Left ventricle myocardium inferior (tissue), 1 donor: ENCODE measurements at regions of chr2 and their contacts with region 1.

Region 1: DNA sequence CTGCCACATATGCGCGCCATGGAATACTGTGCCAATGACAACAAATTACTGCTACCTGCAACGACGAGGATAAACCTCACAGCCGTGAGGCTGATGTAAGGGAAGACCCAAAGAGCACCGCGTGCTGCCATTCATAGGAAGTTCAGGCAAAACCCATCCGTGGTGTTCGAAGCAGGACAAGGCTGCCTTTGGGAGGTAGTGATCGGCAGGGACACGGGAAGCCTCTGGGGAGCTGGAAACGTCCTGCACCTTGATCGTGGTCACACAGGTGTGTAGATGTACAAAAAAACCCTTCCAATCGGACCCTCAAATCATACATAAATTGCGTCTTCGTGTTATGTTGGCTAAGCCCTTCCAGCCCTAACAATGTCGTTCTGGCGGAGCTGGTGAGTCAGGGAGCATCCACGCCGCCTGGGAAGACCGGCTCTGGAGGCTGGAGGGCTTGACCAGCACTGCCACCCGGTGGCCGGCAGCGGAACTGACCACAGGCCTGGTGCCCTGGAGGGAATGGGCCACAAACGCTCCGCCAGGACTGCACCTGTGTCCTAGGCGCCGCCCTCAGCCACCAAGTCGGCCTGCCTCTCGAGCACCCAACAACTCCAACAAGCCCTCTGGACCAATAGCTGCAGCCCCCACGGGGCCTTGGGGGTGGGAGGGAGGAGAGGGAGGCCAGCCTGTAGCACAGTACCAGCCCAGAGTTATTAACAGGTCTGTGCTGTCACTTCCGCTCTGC is 4.1 kb upstream of the NEURL3 start:
- DNase-seq: peak; percentile 88
- H3K4me3 ChIP-seq: no peak overlapping the region
- H3K27ac ChIP-seq: no peak overlapping the region
- H3K4me1 ChIP-seq: peaks cover 19% of the 10 kb centered on the region
- H3K27me3 ChIP-seq: peaks cover 4% of the 10 kb centered on the region
- CTCF ChIP-seq: peak; percentile 99

Region 2: DNA sequence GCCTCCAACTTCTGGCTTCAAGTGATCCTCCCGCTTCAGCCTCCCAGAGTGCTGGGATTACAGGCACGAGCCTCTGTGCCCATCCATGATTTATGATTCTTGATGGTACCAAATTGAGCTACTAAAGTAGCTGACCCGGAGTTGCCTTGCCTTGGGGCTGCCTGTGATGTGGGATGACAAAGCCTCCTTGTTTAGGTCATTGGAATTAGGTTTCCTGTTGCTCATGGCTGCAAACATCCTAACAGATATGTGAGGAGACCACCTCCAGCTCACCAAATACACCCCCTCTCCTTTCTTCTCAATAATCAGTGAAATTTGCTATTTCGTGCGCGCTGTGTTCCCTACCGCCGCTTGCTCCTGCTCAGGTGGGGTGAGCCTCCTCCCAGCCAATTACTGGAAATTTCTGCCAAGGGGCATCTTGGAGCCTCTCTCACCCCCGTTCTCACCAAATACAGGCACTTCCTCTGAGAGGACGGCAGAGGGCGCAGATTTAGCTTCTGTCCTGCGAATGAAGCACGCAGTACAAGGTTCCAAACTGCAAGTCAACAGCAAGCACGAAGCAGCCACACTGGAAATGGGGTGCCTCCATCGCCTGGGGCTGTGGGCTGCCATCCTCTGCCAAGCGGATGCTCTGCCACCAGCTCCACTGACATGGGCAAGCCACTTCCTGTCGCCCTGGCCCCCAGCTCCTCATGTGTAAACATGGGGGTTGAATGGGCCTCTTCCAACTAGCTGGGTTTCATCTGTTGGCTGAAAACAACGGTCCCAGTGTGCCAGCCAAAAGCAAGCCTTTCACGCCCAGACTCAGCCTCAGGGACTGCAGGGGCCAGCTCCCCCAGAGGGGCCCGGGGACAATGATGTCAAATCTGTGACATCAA is 102.0 kb before region 1 on chr2:
- intact Hi-C with region 1: loop called (anchors 5 kb)
- DNase-seq: peak; percentile 41
- H3K4me3 ChIP-seq: no peak overlapping the region
- H3K27ac ChIP-seq: peak overlapping the region; percentile 77
- H3K4me1 ChIP-seq: peaks cover 30% of the 10 kb centered on the region
- H3K27me3 ChIP-seq: no peaks in the 10 kb centered on the region
- CTCF ChIP-seq: peak; percentile 89

Region 3: GRCh38 chr2:96927405-96928243 is 418.3 kb after region 1 on chr2:
- intact Hi-C with region 1: no loop called
- DNase-seq: peak; percentile 52
- H3K4me3 ChIP-seq: peak overlapping the region; percentile 53
- H3K27ac ChIP-seq: peak overlapping the region; percentile 27
- H3K4me1 ChIP-seq: peaks cover 17% of the 10 kb centered on the region
- H3K27me3 ChIP-seq: no peaks in the 10 kb centered on the region
- CTCF ChIP-seq: peak; percentile 34